Cardiac septum (tissue), 1 donor: ENCODE measurements at regions of chr11 and their contacts with region 1.

Region 1: GRCh38 chr11:19553683-19554333 is 158.8 kb upstream of the NAV2 start:
- DNase-seq: peak; percentile 87

Region 2: DNA sequence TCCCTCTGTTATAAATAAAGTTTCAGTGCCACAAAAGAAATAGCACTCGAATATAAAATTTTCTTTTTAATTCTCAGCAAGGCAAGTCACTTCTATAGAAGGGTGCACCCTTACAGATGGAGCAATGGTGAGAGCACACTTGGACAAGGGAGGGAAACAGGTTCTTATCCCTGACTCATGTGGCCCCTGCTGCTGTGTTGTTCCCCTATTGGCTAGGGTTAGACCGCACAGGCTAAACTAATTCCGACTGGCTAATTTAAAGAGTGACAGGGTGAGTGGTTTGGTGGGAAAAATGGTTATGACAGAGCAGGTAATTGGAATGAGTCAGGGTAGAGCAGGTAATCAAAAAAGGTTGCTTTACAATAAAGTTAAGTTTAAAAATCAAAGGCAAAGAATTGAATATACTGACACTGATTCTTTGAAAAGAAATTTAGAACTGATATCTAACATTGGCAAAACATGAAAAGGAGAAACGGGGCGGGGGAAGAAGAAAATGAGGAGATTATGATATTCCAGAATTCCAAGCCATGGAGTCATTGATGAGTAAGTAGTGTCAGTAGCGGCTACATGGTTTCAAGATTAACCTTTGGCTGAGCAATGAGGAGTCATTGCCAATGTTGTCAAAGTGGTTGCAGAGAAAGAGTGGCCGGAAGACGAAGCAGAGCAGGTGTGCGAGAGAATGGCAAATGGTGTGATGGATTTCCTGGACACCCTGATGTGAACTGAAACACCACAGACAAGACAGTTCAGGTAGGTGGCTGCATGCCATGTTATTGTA is 566.2 kb before region 1 on chr11:
- intact Hi-C with region 1: no loop called
- DNase-seq: no peak

Region 3: GRCh38 chr11:19071255-19071654 is 482.6 kb before region 1 on chr11:
- intact Hi-C with region 1: loop called (anchors 2 kb)
- DNase-seq: no peak

Region 4: DNA sequence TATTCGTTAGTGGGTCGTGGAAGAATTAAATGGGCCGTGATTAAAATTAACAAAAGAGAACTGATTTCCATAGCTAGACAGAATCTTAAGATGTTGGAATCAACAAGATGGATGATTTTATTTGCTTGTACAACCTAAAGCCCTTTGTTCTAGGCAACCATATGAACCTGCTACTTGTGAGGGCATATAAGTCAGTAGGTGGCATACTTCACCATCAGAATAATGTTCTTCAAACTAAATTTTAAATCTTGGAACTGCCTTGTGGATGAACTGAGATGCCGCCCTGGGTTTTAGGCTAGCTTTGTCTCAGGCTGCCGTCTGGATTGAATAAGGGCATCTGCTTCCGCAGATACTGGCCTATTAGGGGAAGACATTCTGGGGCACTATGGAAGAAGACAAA is 393.0 kb before region 1 on chr11:
- intact Hi-C with region 1: loop called (anchors 2 kb)
- DNase-seq: no peak

Region 5: GRCh38 chr11:19259487-19260345 is 294.1 kb before region 1 on chr11:
- intact Hi-C with region 1: loop called (anchors 5 kb)
- DNase-seq: no peak

Region 6: GRCh38 chr11:19311308-19312030 is 242.3 kb before region 1 on chr11:
- intact Hi-C with region 1: loop called (anchors 2 kb)
- DNase-seq: no peak

Region 7: GRCh38 chr11:19577391-19577975 is 23.7 kb after region 1 on chr11:
- intact Hi-C with region 1: no loop called
- DNase-seq: no peak

Region 8: GRCh38 chr11:19595840-19596751 is 42.3 kb after region 1 on chr11:
- intact Hi-C with region 1: loop called (anchors 5 kb)
- DNase-seq: no peak